A549 (cell line): ENCODE measurements at regions of chr15 and their contacts with region 1.

Region 1: GRCh38 chr15:82108489-82109078 is 62.8 kb upstream of the MEX3B start:
- DNase-seq: peak; percentile 63 to 80
- ATAC-seq: peak; percentile 91 to 96
- H3K4me3 ChIP-seq: no peak overlapping the region
- H3K27ac ChIP-seq: 0 out of 6 replicates have a peak overlapping the region, but pooled peaks of 1 of the 2 experiments have one; percentile 25
- H3K4me1 ChIP-seq: no peaks in the 10 kb centered on the region
- CTCF ChIP-seq: peak; percentile 88
- EP300 ChIP-seq: no peak
- POLR2A ChIP-seq: no peak
- RAD21 ChIP-seq: peak; percentile 93 to 98

Region 2: DNA sequence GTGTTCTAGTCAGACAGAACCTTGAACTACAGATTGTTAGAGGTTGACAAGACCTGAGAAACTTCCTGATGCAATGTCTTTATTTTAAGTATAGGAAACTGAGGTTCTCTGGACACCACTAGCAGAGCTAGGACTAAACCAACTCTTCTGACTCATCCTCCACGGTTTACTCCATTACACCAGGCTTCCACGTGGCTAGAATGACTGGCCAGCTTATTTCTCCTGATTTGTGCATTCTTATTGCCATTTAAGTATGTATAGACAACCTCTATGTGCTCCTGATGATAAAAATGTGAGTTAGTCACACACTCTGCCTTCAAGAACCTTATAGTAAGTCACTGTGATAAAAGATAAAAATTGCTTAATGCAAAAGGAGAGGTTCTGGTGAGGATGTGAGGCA is 245.4 kb before region 1 on chr15:
- CTCF ChIA-PET with region 1: no interaction called
- POLR2A ChIA-PET with region 1: no interaction called
- DNase-seq: no peak
- ATAC-seq: no peak
- H3K4me3 ChIP-seq: no peak overlapping the region
- H3K27ac ChIP-seq: no peak overlapping the region
- H3K4me1 ChIP-seq: no peaks in the 10 kb centered on the region
- CTCF ChIP-seq: no peak
- EP300 ChIP-seq: no peak
- POLR2A ChIP-seq: no peak
- RAD21 ChIP-seq: no peak

Region 3: GRCh38 chr15:81955382-81956062 is 153.1 kb before region 1 on chr15:
- CTCF ChIA-PET with region 1: no interaction called
- POLR2A ChIA-PET with region 1: no interaction called
- DNase-seq: no peak
- ATAC-seq: no peak
- H3K4me3 ChIP-seq: no peak overlapping the region
- H3K27ac ChIP-seq: no peak overlapping the region
- H3K4me1 ChIP-seq: no peaks in the 10 kb centered on the region
- CTCF ChIP-seq: no peak
- EP300 ChIP-seq: no peak
- POLR2A ChIP-seq: no peak
- RAD21 ChIP-seq: no peak

Region 4: DNA sequence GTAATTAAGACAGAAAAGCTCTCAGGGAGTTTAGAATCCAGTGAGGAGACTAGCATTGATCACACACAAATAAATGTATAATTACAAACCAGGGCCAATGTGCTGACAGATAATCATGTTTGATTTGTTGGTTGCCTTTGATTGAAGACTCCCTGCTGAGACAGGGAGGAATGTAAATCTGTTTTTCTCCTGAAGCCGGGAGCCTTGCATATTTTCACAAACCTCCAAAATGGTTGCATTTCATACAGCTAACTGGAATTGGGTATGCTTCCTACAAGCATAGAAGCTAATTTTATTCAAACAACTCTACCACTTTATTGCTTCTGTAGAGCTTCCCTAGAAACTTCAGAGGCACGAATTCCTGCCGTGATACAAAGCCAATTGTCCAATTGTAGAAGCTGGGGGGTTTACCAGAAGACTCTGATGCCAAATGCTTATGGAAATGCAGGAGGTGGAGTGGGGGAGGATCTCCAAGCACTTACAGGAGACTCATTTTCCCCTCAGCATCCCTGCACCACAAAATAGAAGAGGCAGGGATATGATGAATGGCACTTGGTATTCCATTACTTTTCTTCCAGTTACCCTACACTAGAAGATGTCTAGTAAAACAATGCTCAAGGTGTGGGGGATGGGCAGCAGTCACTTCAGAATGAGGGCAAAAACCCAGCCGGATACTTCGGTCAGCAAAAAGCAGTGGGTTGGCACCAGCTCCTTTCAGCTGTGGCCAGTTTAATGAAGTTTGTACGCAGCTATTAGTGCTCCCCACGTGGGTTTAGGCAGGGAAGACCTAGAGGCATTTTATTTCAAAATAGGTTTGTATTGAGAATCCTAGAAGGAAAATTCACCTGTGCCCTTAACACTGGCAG is 51.4 kb before region 1 on chr15:
- CTCF ChIA-PET with region 1: interaction called, 12 read pairs
- POLR2A ChIA-PET with region 1: no interaction called
- DNase-seq: no peak
- ATAC-seq: no peak
- H3K4me3 ChIP-seq: no peak overlapping the region
- H3K27ac ChIP-seq: no peak overlapping the region
- H3K4me1 ChIP-seq: no peaks in the 10 kb centered on the region; the same call in 2 of the 3 replicates
- CTCF ChIP-seq: no peak
- EP300 ChIP-seq: no peak
- POLR2A ChIP-seq: no peak
- RAD21 ChIP-seq: no peak

Region 5: GRCh38 chr15:82093774-82094211 is 14.8 kb before region 1 on chr15:
- CTCF ChIA-PET with region 1: interaction called, 58 read pairs
- POLR2A ChIA-PET with region 1: no interaction called
- DNase-seq: peak; percentile 74 to 86
- ATAC-seq: peak; percentile 98
- H3K4me3 ChIP-seq: peak overlapping the region; percentile 20; the same call in 2 of the 3 replicates
- H3K27ac ChIP-seq: peak overlapping the region; percentile 69 to 86
- H3K4me1 ChIP-seq: peaks cover 12% of the 10 kb centered on the region; the same call in 2 of the 3 replicates
- CTCF ChIP-seq: no peak
- EP300 ChIP-seq: peak in 1 of 2 experiments; percentile 17; a peak in 1 of 5 replicates
- POLR2A ChIP-seq: no peak
- RAD21 ChIP-seq: no peak

Region 6: GRCh38 chr15:82139823-82140268 is 31.3 kb after region 1 on chr15:
- CTCF ChIA-PET with region 1: interaction called, 570 read pairs
- POLR2A ChIA-PET with region 1: no interaction called
- DNase-seq: peak; percentile 56 to 63
- ATAC-seq: peak; percentile 79 to 84
- H3K4me3 ChIP-seq: no peak overlapping the region
- H3K27ac ChIP-seq: peak overlapping the region in 1 of 2 experiments; percentile 43; a peak in 1 of 6 replicates
- H3K4me1 ChIP-seq: 0 out of 3 replicates have a peak, but pooled peaks cover 3% of the 10 kb centered on the region
- CTCF ChIP-seq: peak; percentile 88
- EP300 ChIP-seq: no peak
- POLR2A ChIP-seq: no peak
- RAD21 ChIP-seq: peak; percentile 81 to 82

Region 7: DNA sequence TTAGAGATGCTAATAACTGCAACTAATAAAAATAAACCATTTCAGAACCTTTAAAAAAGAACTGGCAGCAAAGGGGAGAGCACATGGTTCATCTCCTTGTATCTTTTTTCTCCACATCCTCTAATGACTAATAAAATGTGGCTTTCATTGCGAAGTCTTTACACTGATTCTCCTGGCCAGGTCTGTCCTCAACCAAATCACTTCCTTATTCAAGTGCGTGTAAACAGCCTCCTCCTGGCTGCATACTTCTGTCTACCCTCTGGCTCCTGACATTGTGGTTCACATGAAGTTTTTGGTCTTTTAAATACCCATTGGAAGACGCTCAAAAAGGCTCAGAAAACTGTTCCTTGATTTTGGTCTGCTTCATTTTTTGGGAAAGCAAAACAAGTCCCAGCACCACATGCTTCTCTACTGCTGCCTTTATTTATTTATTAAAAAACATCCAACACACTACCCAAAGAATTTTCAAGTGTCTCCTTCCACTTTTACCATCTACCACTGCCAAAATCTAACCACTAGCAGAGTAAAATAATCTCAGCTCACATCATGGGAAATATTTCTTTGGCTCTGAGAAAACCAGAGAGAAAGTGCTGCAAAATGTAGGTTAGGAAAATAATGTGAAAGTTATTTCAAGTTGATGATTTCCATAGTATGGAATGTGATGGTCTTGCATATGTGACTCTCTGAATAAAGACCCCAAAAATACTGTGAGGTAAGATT is 68.9 kb after region 1 on chr15:
- CTCF ChIA-PET with region 1: interaction called, 15 read pairs
- POLR2A ChIA-PET with region 1: no interaction called
- DNase-seq: no peak
- ATAC-seq: no peak
- H3K4me3 ChIP-seq: no peak overlapping the region
- H3K27ac ChIP-seq: no peak overlapping the region
- H3K4me1 ChIP-seq: peaks cover 14% of the 10 kb centered on the region
- CTCF ChIP-seq: no peak
- EP300 ChIP-seq: no peak
- POLR2A ChIP-seq: no peak
- RAD21 ChIP-seq: no peak

Region 8: DNA sequence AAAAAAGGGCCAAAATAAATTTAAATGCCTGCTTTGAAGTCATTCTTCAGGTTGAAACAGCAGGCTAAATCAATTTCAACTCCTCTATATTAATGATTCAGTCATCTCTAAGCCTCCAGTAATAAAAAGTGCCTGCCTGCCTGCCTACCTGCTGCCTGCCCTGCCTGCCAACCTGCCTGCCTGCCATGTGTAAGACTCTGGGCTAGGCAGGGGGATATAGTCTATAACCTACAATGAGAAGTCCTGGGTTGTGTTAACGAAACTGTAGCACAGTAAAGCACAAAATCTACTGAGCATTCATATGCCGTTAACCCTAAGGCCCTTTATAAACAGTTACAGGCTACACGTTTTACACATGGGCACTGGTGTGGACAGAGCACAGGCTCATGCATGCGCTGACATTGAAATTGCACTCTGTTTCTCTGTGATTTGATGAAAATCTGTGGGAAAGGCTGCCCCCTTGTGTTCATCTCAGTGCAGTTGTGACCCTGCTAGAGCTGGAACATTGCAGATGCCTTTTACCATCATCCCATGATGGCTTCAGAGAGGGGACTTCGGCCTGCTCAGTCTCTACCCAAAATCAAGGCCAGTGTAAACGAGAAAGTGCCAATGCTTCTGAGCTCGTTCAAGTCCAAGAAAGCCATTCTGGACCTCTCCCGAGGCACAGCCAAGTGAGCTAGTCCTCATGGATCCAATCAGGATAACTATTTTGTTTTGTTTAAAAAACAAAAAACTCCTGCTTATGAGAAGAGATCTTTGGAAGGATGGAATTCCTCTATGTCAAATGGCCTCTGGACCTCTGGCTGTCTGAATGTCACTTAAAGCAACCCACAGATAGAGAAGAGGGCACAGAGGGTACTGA is 89.4 kb after region 1 on chr15:
- CTCF ChIA-PET with region 1: interaction called, 106 read pairs
- POLR2A ChIA-PET with region 1: interaction called, 3 read pairs
- DNase-seq: peak; percentile 67 to 75
- ATAC-seq: peak; percentile 95 to 99
- H3K4me3 ChIP-seq: no peak overlapping the region
- H3K27ac ChIP-seq: no peak overlapping the region
- H3K4me1 ChIP-seq: no peaks in the 10 kb centered on the region
- CTCF ChIP-seq: peak; percentile 90
- EP300 ChIP-seq: no peak
- POLR2A ChIP-seq: no peak
- RAD21 ChIP-seq: peak; percentile 91